Panc1 (cell line): ENCODE measurements at regions of chr11 and their contacts with region 1.

Region 1: DNA sequence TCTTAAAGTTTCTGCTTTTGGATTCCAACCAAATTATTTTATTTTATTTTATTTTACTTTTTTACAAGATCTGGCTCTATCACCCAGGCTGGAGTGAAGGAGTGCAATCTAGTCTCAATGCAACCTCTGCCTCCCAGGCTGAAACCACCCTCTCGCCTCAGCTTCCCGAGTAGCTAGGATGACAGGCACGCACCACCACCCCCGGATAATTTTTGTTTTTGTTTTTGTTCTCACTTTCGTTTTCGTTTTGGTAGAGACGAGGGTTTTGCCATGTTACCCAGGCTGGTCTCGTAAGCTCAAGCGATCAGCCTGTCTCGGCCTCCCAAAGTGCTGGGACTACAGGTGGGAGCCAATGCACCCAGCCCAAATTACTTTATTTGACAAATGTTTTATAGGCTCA is 219.8 kb downstream of the ETS1 start:
- DNase-seq: no peak
- ATAC-seq: peak; percentile 72
- H3K4me3 ChIP-seq: peak overlapping the region; percentile 16 to 49
- H3K27ac ChIP-seq: no peak overlapping the region
- H3K4me1 ChIP-seq: no peaks in the 10 kb centered on the region
- H3K27me3 ChIP-seq: no peaks in the 10 kb centered on the region
- CTCF ChIP-seq: no peak

Region 2: GRCh38 chr11:128432926-128433325 is 65.4 kb after region 1 on chr11:
- CTCF ChIA-PET with region 1: interaction called, 12 read pairs
- POLR2A ChIA-PET with region 1: no interaction called
- in situ Hi-C with region 1: no loop called
- intact Hi-C with region 1: no loop called
- DNase-seq: no peak
- ATAC-seq: no peak
- H3K4me3 ChIP-seq: no peak overlapping the region
- H3K27ac ChIP-seq: no peak overlapping the region
- H3K4me1 ChIP-seq: peaks cover 4% of the 10 kb centered on the region; the same call in 1 of the 2 replicates
- H3K27me3 ChIP-seq: no peaks in the 10 kb centered on the region
- CTCF ChIP-seq: no peak